Heart right ventricle (tissue), 16 donors: ENCODE measurements at regions of chr21 and their contacts with region 1.

Region 1: GRCh38 chr21:35482933-35483662 is 434.0 kb upstream of the RUNX1 start:
- DNase-seq: no peak
- ATAC-seq: no peak
- H3K4me3 ChIP-seq: no peak overlapping the region
- H3K27ac ChIP-seq: no peak overlapping the region
- H3K4me1 ChIP-seq: peaks cover 0 to 9% (median 0%) of the 10 kb centered on the region in 9 donors
- H3K27me3 ChIP-seq: peaks cover 0 to 14% (median 5%) of the 10 kb centered on the region in 7 donors
- CTCF ChIP-seq: no peak

Region 2: GRCh38 chr21:35457097-35457804 is 25.8 kb before region 1 on chr21:
- intact Hi-C with region 1: no loop called
- DNase-seq: no peak
- ATAC-seq: no peak
- H3K4me3 ChIP-seq: no peak overlapping the region
- H3K27ac ChIP-seq: no peak overlapping the region
- H3K4me1 ChIP-seq: peaks cover 0 to 10% (median 0%) of the 10 kb centered on the region in 9 donors
- H3K27me3 ChIP-seq: no peaks in the 10 kb centered on the region
- CTCF ChIP-seq: no peak

Region 3: DNA sequence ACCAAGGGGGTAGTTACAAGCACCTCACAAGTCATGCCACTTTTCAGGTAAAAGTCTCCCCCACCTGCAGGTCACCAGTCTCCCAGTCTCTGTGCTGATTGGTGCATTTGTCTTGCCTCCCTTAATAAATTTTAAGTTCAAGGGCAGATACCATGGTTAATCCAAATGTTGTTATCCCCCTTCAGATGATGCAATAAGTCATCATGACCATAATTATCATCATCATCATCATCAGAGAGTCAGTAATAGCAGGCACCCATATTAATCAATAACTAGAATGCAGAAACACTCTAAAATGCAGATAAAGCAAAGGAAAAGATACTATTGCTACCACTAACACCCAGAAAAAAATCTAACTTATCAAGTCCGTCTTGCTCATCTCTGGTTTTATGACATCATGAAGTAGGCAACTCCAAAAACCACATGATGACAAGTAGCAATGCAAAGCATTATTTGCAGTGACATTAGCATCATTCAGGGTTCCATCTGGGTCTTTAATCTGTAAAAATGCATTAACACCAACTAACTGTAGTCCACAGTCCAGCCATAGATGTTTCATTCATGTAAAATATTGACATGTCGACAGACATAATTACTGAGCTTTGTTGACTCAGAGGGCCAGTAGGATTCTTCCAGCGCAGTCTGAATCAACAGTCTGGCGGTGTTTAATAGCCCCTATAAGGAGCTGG is 58.0 kb after region 1 on chr21:
- intact Hi-C with region 1: loop called in 1 of 10 experiments (anchors 10 kb)
- DNase-seq: no peak
- ATAC-seq: no peak
- H3K4me3 ChIP-seq: no peak overlapping the region
- H3K27ac ChIP-seq: no peak overlapping the region
- H3K4me1 ChIP-seq: no peaks in the 10 kb centered on the region
- H3K27me3 ChIP-seq: peaks cover 0 to 11% (median 0%) of the 10 kb centered on the region in 7 donors
- CTCF ChIP-seq: no peak